Heart left ventricle (tissue), 16 donors: ENCODE measurements at regions of chr3 and their contacts with region 1.

Region 1: DNA sequence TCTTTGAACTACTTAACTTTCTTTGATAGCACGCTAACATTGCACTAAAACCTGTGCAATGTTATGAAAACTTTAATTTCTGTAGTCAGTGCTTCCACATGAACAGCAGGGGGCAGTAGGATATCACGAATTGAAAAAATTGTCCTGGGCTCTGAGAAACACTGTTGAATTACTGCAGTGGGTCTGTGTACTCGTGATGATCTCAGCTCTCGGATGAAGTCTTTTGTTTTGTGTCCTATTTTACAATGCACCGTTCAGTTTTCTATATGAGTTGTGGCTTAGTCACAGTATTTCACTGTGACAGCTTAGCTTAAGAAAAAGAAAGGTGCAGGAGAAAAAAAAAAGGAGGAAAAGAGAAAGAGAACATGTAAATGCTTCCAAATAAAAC is 141.3 kb upstream of the CCDC54 start:
- DNase-seq: peak in 3 of 5 donors; percentile 31 to 60 (median 52)
- ATAC-seq: peak; percentile 60 to 81 (median 74)
- H3K4me3 ChIP-seq: peak overlapping the region in 11 of 12 donors; percentile 21 to 62 (median 49)
- H3K27ac ChIP-seq: peak overlapping the region in 11 of 12 donors; percentile 16 to 70 (median 53)
- H3K4me1 ChIP-seq: peaks cover 0 to 18% (median 8%) of the 10 kb centered on the region in 12 donors
- H3K27me3 ChIP-seq: no peaks in the 10 kb centered on the region
- CTCF ChIP-seq: peak; percentile 81 to 94 (median 89)
- POLR2A ChIP-seq: no peak

Region 2: DNA sequence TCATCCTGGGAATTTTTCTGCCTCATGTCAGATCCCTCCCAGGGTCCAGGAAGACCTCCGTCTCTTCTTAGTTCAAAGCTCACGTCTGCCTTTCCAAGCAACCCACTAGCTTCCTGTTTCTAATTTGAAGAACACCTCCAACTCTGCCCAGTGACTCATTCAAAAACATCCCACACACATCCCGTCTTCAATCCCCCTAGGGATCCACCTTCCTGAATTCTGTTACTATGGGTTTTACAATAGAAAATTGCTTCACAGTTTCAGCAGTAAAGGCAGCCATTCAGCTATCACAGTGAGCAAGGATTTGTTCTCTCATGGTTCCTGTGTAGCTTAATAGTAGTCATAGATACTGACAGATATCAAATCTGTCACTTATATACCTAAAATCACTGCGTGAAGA is 166.9 kb before region 1 on chr3:
- intact Hi-C with region 1: no loop called
- DNase-seq: peak in 2 of 5 donors; percentile 20 to 25
- ATAC-seq: peak in 3 of 4 donors; percentile 73 to 84 (median 75)
- H3K4me3 ChIP-seq: no peak overlapping the region
- H3K27ac ChIP-seq: peak overlapping the region in 5 of 12 donors; percentile 3 to 50 (median 14)
- H3K4me1 ChIP-seq: peaks cover 0 to 21% (median 10%) of the 10 kb centered on the region in 12 donors
- H3K27me3 ChIP-seq: no peaks in the 10 kb centered on the region
- CTCF ChIP-seq: no peak
- POLR2A ChIP-seq: no peak

Region 3: GRCh38 chr3:107153981-107154380 is 81.9 kb before region 1 on chr3:
- intact Hi-C with region 1: no loop called
- DNase-seq: no peak
- ATAC-seq: peak; percentile 64 to 88 (median 68)
- H3K4me3 ChIP-seq: no peak overlapping the region
- H3K27ac ChIP-seq: no peak overlapping the region
- H3K4me1 ChIP-seq: peaks cover 0 to 18% (median 2%) of the 10 kb centered on the region in 12 donors
- H3K27me3 ChIP-seq: no peaks in the 10 kb centered on the region
- CTCF ChIP-seq: no peak
- POLR2A ChIP-seq: no peak

Region 4: DNA sequence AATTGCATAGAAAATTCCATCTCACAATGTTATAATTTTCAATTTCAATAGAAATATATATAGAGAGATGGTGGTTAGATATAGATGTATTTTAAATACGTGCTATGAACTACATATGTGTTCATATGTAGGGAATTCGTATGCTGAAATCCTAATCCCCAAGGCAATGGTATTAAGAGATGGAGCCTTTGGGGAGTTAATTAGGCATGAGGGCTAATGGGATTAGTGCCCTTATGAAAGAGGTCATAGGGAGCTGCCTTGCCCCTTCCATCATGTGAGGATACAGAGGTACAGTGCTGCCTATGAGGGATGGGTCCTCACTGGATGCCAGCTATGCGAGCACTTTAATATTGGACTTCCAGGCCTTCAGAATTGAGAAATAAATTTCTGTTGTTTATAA is 61.7 kb after region 1 on chr3:
- intact Hi-C with region 1: no loop called
- DNase-seq: no peak
- ATAC-seq: no peak
- H3K4me3 ChIP-seq: no peak overlapping the region
- H3K27ac ChIP-seq: no peak overlapping the region
- H3K4me1 ChIP-seq: no peaks in the 10 kb centered on the region
- H3K27me3 ChIP-seq: no peaks in the 10 kb centered on the region
- CTCF ChIP-seq: no peak
- POLR2A ChIP-seq: no peak

Region 5: DNA sequence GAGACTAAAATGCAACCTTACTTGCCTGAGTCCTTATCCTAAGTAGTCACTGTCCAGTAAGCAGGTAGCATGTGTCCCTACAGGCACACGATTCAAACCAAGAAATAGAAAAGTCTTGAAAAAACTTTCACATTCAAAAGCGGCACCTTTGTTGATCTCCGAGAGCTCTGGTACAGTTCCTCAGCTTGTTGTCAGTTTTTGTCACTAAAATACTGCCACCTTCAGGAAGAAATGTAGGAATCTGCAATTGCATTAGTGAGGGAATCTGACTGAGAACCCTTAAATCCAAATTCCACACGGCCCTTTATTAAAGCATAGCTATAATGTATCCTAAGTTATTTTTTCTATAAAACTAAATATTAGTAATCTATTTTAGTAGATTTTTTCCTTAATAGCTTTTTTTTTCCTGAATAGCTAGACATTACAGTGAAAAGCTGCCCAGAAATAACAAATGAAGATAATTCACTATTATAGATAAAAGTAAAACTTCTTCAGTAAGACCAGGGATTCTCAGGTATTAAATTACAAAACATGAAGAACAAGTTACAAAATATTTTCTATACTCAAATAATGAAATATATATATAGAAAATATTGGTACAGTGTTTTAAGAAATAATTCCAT is 185.4 kb after region 1 on chr3:
- intact Hi-C with region 1: loop called in 7 of 10 experiments (anchors 2 to 10 kb)
- DNase-seq: peak in 1 of 5 donors; percentile 13
- ATAC-seq: peak; percentile 65 to 89 (median 75)
- H3K4me3 ChIP-seq: peak overlapping the region in 10 of 12 donors; percentile 17 to 60 (median 48)
- H3K27ac ChIP-seq: peak overlapping the region in 3 of 12 donors; percentile 10 to 36 (median 22)
- H3K4me1 ChIP-seq: peaks cover 0 to 7% (median 0%) of the 10 kb centered on the region in 12 donors
- H3K27me3 ChIP-seq: no peaks in the 10 kb centered on the region
- CTCF ChIP-seq: peak; percentile 59 to 83 (median 72)
- POLR2A ChIP-seq: no peak

Region 6: GRCh38 chr3:107543666-107544065 is 307.7 kb after region 1 on chr3:
- intact Hi-C with region 1: loop called in 1 of 10 experiments (anchors 10 kb)
- DNase-seq: no peak
- ATAC-seq: no peak
- H3K4me3 ChIP-seq: no peak overlapping the region
- H3K27ac ChIP-seq: no peak overlapping the region
- H3K4me1 ChIP-seq: peaks cover 0 to 9% (median 0%) of the 10 kb centered on the region in 12 donors
- H3K27me3 ChIP-seq: no peaks in the 10 kb centered on the region
- CTCF ChIP-seq: peak in 8 of 12 donors; percentile 16 to 45 (median 32)
- POLR2A ChIP-seq: no peak

Region 7: DNA sequence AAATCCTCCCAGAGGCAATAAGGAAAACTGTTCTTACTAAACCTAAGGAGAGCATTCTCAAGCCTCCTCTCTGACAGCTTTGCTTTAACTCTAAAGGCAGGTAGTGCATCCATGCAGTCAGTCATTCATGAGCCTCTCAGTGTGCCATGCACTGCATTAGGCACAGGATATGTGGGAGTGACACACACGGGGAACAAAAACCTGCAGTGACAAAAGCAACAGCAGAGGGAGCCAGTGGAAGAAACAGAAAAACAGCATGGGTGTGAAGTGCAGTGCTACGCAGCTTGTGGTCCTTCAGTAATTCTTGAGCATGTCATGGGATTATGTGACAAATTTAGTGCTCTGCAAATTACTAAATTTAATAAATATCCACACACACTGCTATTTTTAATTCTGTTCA is 517.6 kb after region 1 on chr3:
- intact Hi-C with region 1: loop called in 4 of 10 experiments (anchors 10 kb)
- DNase-seq: peak in 2 of 5 donors; percentile 9 to 26
- ATAC-seq: peak in 3 of 4 donors; percentile 29 to 70 (median 58)
- H3K4me3 ChIP-seq: no peak overlapping the region
- H3K27ac ChIP-seq: no peak overlapping the region
- H3K4me1 ChIP-seq: no peaks in the 10 kb centered on the region
- H3K27me3 ChIP-seq: no peaks in the 10 kb centered on the region
- CTCF ChIP-seq: peak in 11 of 12 donors; percentile 20 to 48 (median 39)
- POLR2A ChIP-seq: no peak

Region 8: DNA sequence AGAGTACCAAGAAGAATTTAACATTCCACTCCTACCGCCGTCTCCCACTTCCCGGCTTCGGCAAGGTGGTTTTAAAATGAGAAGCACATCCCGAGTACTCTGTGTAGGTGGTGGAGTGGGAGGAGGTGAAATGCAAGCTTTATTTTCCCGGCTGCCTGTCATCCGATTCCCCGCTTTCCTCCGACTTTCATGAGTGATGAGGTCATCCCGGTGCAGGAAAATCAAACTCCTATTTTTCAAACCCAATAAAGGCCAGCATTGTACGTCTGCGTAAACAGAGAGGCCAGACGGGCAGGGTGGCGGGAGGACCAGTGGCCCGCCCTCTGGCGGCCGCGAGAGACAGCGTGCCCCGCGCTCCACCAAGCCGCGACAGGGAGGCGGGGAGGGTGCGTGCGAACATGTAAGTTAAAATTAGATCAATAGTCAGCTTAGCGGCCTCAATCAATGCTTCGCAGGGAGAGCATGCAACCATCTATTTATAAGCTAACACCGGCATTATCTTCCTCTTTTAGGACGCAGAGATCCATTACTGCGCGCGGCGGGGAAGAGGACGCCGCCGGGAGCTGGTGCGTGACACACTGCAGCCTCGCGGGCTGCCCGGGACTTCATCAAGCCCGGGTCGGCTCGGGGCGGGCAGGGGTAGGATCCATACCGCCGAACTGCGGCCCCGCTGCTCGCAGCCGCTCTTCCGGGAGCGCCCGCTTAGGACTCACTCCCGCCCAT is 691.6 kb after region 1 on chr3:
- intact Hi-C with region 1: loop called in 6 of 10 experiments (anchors 5 to 10 kb)
- DNase-seq: peak; percentile 59 to 84 (median 65)
- ATAC-seq: peak; percentile 85 to 99 (median 97)
- H3K4me3 ChIP-seq: peak overlapping the region; percentile 35 to 78 (median 61)
- H3K27ac ChIP-seq: peak overlapping the region in 1 of 12 donors; percentile 29
- H3K4me1 ChIP-seq: peaks cover 0 to 18% (median 7%) of the 10 kb centered on the region in 12 donors
- H3K27me3 ChIP-seq: peaks cover 0 to 15% (median 0%) of the 10 kb centered on the region in 9 donors
- CTCF ChIP-seq: peak; percentile 82 to 97 (median 93)
- POLR2A ChIP-seq: no peak

Region 9: DNA sequence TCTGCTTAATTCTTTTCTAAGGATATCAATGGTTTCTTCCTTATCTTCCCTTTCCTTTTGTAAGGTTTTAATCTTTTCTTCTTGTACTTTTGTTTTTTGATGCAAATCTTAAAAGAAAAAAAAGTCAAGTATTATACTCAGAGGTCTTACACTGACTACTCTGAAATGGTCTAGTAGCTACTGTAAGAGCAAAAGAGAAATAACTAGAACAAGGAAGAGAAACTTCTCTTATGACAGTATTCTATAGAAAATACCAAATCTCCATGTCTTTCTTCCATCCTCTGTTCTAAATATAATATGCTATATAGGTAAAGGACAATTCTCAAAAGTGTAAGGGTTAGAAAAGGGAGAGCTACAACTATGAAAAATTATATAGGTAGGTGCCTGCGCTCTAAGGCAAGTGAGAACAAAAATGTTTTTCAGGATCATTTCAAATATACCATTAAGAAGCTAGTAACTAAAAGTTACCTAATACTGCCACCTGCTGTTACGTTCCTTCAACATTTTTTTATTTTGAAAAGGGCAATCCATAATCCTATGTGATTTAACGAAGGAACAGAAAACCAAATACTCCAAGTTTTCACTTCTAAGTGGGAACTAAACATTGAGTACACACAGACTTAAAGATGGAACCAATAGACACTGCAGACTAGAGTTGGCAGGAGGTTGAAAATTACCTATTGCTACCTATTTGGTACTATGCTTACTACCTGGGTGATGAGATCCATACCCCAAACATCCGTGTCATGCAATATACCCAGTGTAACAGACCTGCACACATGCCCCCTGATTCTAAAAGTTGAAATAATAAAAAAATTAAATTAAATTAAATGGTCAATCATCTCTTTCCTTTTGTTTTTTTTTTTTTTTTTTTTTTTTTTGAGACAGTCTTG is 1316.6 kb after region 1 on chr3:
- intact Hi-C with region 1: loop called in 1 of 10 experiments (anchors 10 kb)
- DNase-seq: no peak
- ATAC-seq: peak; percentile 39 to 68 (median 46)
- H3K4me3 ChIP-seq: peak overlapping the region in 3 of 12 donors; percentile 8 to 22 (median 10)
- H3K27ac ChIP-seq: no peak overlapping the region
- H3K4me1 ChIP-seq: peaks cover 0 to 11% (median 0%) of the 10 kb centered on the region in 12 donors
- H3K27me3 ChIP-seq: no peaks in the 10 kb centered on the region
- CTCF ChIP-seq: peak; percentile 13 to 74 (median 59)
- POLR2A ChIP-seq: no peak